ENCODE measurements at regions of chr20 and their contacts with region 1.

Region 1: GRCh38 chr20:63707549-63708300 is at the starts of genes ARFRP1 and ZGPAT:
- DNase-seq: no peak
- H3K4me3 ChIP-seq: peak within 1 kb of the TSS; percentile 77
- CTCF ChIP-seq: no peak

Region 2: DNA sequence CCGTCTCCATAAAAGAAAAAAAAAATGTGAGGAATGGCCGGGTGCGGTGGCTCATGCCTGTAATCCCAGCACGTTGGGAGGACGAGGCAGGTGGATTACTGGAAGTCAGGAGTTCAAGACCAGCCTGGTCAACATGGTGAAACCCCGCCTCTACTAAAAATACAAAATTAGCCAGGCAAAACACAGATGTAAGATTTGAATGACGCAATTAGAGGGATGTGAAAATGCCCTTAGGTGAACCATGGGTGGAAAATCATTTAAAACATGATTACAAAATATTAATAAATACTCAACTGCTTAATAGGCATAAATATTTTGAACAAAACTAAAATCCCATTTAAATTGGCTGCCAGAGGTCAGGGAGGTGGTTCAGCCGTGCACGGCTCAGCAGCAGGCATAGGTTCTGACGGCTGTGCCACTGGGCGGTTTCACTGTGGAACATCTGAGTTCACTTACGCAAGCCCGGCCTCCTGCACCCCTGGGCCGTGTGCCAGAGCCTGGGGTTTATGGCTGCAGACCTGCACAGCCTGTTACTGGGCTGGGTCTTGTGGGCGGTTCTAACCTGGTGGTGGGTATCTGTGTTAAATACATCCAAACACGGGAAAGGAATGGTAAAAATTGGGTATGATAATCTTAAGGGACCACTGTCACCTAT is 869.8 kb before region 1 on chr20:
- CTCF ChIA-PET with region 1: no interaction called
- POLR2A ChIA-PET with region 1: no interaction called
- DNase-seq: no peak
- H3K4me3 ChIP-seq: no peak overlapping the region
- CTCF ChIP-seq: no peak

Region 3: GRCh38 chr20:63602321-63602720 is 105.4 kb before region 1 on chr20:
- CTCF ChIA-PET with region 1: no interaction called
- POLR2A ChIA-PET with region 1: no interaction called
- DNase-seq: no peak
- H3K4me3 ChIP-seq: no peak overlapping the region
- CTCF ChIP-seq: no peak

Region 4: DNA sequence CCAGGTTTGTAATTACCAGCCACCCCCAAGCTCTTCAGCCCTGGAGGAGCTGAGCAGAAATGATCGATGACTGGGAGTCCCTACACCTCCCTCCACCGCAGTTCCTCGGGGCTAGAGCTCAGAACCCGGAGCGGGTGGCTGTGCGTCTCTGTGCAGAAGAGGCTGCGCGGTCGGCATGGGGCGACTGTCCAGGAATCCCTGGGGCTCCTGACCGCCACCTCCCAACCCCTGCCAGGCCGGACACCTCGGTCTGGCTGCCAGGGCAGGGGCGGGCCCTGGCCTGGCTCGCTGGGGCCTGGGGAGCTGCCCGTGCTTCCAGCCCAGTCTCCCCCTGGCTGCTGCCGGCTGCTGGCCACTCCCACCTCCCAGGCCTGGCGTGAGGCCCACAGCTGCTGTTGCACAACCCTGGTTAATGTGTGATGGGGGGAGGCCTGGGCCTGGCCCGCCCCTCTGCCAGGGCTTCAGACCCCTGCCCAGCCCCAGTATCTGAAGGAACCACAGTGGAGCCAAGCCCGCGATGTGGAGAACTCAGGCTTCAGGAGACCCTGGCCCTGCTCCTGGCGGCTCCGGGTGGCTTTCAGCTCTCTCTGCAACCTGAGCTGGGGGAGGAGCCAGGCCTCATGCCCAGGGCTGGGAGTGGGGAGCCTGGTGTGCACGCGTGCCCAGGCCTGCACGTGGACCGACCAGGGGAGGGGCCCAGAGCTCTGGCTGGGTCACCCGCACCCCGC is 33.1 kb after region 1 on chr20:
- CTCF ChIA-PET with region 1: interaction called, 4 read pairs
- POLR2A ChIA-PET with region 1: interaction called, 10 read pairs
- DNase-seq: peak; percentile 26
- H3K4me3 ChIP-seq: peak overlapping the region; percentile 75
- CTCF ChIP-seq: peak; percentile 34